Activated CD4-positive, alpha-beta T cell treated with anti-CD3 and anti-CD28 coated beads for 36 hours (primary cell): ENCODE measurements at regions of chr5 and their contacts with region 1.

Region 1: GRCh38 chr5:142748568-142749249 is 21.5 kb upstream of the ARHGAP26 start:
- DNase-seq: peak; percentile 77
- ATAC-seq: peak; percentile 79
- H3K4me3 Mint-ChIP-seq: no peak overlapping the region
- H3K27ac Mint-ChIP-seq: no peak overlapping the region
- H3K4me1 Mint-ChIP-seq: peaks cover 13% of the 10 kb centered on the region
- H3K27me3 Mint-ChIP-seq: peaks cover 2% of the 10 kb centered on the region

Region 2: DNA sequence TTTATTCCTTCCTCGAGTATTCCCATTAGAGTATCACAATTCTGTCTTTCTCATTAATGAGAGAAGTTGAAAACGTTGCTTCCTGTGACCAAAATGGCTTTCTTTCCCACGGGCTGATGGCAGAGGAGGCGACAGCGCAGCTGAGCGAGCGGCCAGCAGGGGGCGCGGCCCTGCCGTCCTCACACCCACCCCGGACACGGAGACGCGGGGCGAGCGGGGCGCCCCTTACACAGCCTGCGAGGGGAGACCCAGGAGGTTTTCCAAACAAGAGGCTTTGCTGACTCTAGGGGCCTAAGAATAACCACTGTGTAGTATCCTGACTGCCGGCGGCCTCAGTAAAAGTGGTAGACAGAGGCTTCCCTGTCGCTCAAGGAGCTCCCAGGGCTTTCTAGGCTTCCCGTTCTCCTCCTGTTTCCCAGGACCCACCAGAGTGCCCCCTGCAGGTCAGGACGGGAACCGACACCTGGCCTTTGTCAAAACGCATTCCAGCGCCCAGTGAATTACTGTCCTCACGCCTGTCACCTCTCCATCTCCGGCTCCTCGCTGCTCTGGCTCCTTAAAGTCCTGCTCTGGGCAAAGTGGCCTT is 35.5 kb before region 1 on chr5:
- CTCF ChIA-PET with region 1: interaction called, 149 read pairs
- POLR2A ChIA-PET with region 1: no interaction called
- intact Hi-C with region 1: no loop called
- DNase-seq: peak; percentile 92
- ATAC-seq: peak; percentile 95
- H3K4me3 Mint-ChIP-seq: peak overlapping the region; percentile 64
- H3K27ac Mint-ChIP-seq: no peak overlapping the region
- H3K4me1 Mint-ChIP-seq: peaks cover 3% of the 10 kb centered on the region
- H3K27me3 Mint-ChIP-seq: no peaks in the 10 kb centered on the region

Region 3: DNA sequence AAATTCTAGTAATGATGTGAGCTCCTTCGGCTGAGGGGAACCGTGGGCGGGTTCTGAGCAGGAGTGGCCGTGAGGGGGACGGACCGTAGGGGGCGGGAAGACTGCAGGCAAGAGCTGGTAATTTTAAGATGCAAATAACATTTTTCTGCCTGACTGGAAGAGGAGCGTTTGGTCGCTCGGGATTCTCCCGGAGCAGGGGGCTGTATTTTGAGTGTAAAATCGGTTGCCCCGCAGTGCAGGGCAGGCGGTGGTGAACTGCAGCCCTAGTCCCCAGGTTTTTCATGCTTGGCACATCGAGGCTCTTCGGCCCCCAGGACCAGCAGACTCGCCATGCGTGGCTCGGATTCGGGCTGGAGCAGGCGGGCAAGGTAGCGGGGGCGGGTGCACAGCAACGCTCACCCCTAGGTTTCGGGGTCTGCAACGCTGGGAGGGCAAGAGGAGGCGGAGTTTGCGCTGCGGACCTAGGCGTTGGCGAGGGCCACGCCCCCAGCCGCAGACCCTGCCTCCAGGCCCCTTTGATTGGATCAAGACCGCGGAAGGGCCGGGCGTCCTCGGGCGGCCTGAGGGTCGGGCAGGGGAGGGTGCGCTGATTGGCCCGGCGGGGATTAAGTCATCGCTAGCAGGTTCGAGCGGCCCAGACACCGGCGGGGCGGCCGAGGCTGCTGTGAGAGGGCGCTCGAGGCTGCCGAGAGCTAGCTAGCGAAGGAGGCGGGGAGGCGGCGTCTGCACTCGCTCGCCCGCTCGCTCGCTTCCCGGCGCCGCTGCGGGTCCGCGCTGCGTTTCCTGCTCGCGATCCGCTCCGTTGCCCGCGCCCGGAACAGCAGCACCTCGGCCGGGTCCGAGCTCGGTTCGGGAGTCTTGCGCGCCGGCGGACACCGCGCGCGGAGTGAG is 21.3 kb after region 1 on chr5 and contains the start of gene ARHGAP26:
- CTCF ChIA-PET with region 1: interaction called, 75 read pairs
- POLR2A ChIA-PET with region 1: interaction called, 4 read pairs
- intact Hi-C with region 1: no loop called
- DNase-seq: peak; percentile 96
- ATAC-seq: peak; percentile 91
- H3K4me3 Mint-ChIP-seq: peak within 1 kb of the TSS; percentile 84
- H3K27ac Mint-ChIP-seq: peak within 1 kb of the TSS; percentile 88
- H3K4me1 Mint-ChIP-seq: peaks cover 40% of the 10 kb centered on the region
- H3K27me3 Mint-ChIP-seq: no peaks in the 10 kb centered on the region
- total RNA-seq, gene ARHGAP26: 12.8 to 15.4 TPM

Region 4: GRCh38 chr5:142860270-142860669 is 111.6 kb after region 1 on chr5:
- CTCF ChIA-PET with region 1: interaction called, 42 read pairs
- POLR2A ChIA-PET with region 1: no interaction called
- intact Hi-C with region 1: no loop called
- DNase-seq: no peak
- ATAC-seq: no peak
- H3K4me3 Mint-ChIP-seq: no peak overlapping the region
- H3K27ac Mint-ChIP-seq: no peak overlapping the region
- H3K4me1 Mint-ChIP-seq: peaks cover 29% of the 10 kb centered on the region
- H3K27me3 Mint-ChIP-seq: no peaks in the 10 kb centered on the region

Region 5: GRCh38 chr5:142881076-142881783 is 132.5 kb after region 1 on chr5:
- CTCF ChIA-PET with region 1: interaction called, 229 read pairs
- POLR2A ChIA-PET with region 1: no interaction called
- intact Hi-C with region 1: loop called (anchors 1 kb)
- DNase-seq: no peak
- ATAC-seq: peak; percentile 58
- H3K4me3 Mint-ChIP-seq: no peak overlapping the region
- H3K27ac Mint-ChIP-seq: no peak overlapping the region
- H3K4me1 Mint-ChIP-seq: no peaks in the 10 kb centered on the region
- H3K27me3 Mint-ChIP-seq: no peaks in the 10 kb centered on the region

Region 6: DNA sequence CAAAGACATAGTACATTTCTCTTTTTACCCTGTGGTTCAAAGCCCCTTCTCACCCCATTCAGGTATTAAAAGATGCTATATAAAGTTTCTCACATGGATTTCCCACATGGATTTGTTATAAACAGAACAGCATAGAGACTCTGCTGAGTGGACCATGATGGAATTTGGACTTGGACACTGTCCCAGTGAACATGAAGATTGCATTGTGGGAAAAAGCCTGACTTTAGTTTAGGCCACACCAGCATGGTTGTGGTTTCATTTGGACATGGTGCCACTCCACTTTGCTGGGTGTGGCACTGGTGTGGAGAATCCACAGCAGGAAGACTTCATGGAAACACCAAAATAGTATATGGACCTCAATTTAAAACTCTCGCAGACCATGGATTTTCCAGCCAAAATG is 146.0 kb after region 1 on chr5:
- CTCF ChIA-PET with region 1: interaction called, 84 read pairs
- POLR2A ChIA-PET with region 1: no interaction called
- intact Hi-C with region 1: loop called (anchors 2 kb)
- DNase-seq: no peak
- ATAC-seq: no peak
- H3K4me3 Mint-ChIP-seq: no peak overlapping the region
- H3K27ac Mint-ChIP-seq: no peak overlapping the region
- H3K4me1 Mint-ChIP-seq: no peaks in the 10 kb centered on the region
- H3K27me3 Mint-ChIP-seq: no peaks in the 10 kb centered on the region